GM13976 (cell line): ENCODE measurements at regions of chr10 and their contacts with region 1.

Region 1: DNA sequence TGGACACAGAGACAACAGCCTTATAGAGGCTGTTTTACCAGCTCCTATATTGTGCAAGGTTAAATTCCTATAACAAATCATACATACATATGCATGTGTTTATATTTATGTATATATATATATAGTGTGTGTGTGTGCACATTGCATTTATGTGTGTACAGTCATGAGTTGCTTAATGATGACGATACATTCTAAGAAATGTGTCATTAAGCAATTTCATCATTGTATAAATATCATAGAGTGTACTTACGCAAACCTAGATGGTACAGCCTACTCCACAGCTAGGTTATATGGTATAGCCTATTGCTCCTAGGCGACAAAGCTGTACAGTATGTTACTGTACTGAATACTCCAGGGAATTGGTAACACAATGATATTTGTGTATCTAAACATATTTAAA is 30.1 kb upstream of the TNKS2 start:
- DNase-seq: no peak
- CTCF ChIP-seq: no peak

Region 2: DNA sequence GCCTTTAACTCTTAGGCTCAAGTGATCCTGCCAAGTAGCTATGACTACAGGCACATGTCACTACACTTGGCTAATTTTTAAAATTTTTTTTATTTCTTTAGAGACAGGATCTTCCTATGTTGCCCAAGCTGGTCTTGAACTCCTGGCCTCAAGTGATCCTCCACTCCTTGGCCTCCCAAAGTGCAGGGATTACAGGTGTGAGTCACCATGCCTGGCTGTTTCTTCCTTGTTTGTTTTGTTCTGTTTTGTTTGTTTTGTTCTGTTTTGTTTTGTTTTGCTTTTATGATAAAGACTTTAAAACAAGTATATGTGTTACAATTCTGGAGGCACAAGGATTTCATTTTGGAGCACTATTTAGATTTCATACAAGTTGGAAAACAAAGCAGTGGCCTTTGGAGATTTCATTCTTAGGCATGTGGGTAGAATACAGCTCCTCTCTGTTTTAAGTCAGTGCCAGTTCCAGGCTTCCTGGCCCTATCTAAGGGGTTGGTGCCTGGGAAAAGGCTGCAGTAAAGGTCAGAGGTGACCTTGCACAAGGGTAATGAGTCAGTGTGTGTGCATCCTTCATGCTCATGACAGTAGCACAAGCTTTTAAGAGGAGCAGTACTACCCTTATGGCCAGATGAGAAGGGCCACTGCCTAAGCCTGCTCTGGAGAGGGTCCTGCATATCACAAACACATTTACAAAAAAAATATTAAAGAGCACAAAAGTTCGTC is 123.3 kb after region 1 on chr10:
- in situ Hi-C with region 1: loop called (anchors 10 kb)
- DNase-seq: no peak
- CTCF ChIP-seq: no peak